Tibial artery (tissue), 4 donors: ENCODE measurements at regions of chr12 and their contacts with region 1.

Region 1: GRCh38 chr12:53287741-53288216 is 7.6 kb upstream of the PFDN5 start:
- DNase-seq: peak; percentile 59 to 77
- H3K4me3 ChIP-seq: no peak overlapping the region
- H3K27ac ChIP-seq: no peak overlapping the region
- H3K4me1 ChIP-seq: no peaks in the 10 kb centered on the region
- H3K27me3 ChIP-seq: no peaks in the 10 kb centered on the region
- CTCF ChIP-seq: peak; percentile 53 to 69

Region 2: GRCh38 chr12:53213348-53213747 is 74.4 kb before region 1 on chr12:
- intact Hi-C with region 1: loop called (anchors 2 kb)
- DNase-seq: peak; percentile 79 to 87
- H3K4me3 ChIP-seq: no peak overlapping the region
- H3K27ac ChIP-seq: no peak overlapping the region
- H3K4me1 ChIP-seq: peaks cover 4 to 44% (median 35%) of the 10 kb centered on the region in 4 donors
- H3K27me3 ChIP-seq: no peaks in the 10 kb centered on the region
- CTCF ChIP-seq: peak; percentile 89 to 94